Cardiac septum (tissue), 1 donor: ENCODE measurements at regions of chr6 and their contacts with region 1.

Region 1: GRCh38 chr6:21589352-21590345 is 3.9 kb upstream of the SOX4 start:
- DNase-seq: peak; percentile 94

Region 2: DNA sequence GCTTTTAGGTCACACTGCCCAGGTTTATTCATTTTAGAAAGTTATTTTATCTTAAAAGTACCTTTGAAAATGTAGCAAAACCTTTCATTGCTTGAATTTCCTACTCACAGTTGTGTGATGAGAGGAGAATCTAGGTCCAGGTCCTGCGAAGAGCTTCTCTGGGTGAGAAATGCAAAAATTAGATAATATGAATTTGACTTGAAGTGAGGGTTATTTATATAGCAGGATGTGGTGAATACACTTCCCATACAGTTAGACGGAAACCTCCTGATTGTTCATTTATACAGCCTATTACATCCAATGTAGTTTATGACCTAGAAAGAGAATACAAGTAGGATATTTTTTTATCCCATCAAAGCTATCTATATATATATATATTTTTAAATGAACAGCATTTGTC is 1024.9 kb before region 1 on chr6:
- intact Hi-C with region 1: loop called (anchors 5 kb)
- DNase-seq: no peak

Region 3: DNA sequence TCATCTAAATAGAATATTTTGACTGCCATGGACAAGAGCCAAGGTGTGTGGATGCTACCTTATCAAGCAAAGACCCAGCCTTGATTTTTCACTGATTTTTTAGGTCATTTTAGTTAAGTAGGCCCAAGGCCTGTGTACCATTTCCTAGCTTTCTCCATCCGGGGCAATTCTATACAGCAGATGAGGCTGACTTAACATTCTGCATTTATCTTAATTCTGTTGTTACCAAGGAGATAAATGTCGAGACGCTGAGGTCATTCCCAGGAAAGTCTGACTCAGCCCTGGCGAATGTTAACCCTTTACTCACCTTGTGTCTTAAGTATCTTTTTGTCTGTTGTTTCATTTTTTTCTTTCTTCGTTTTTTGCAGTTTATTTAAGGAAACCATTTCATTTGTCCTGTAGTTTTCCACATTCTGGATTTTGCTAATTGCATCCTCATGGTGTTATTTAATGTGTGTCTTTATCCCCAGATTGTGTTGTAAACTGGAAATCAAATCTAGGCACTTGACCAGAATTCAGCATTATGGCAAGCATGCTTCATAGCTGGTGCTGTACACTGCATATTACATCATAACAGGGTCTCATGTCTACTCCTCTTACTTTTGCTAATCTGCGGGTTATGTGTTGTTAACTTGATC is 778.4 kb before region 1 on chr6:
- intact Hi-C with region 1: loop called (anchors 10 kb)
- DNase-seq: no peak

Region 4: GRCh38 chr6:20873425-20874190 is 716.0 kb before region 1 on chr6:
- intact Hi-C with region 1: loop called (anchors 5 kb)
- DNase-seq: no peak

Region 5: GRCh38 chr6:21331235-21331634 is 258.4 kb before region 1 on chr6:
- intact Hi-C with region 1: loop called (anchors 5 kb)
- DNase-seq: no peak